Ovary (tissue), 10 donors: ENCODE measurements at regions of chr1 and their contacts with region 1.

Region 1: GRCh38 chr1:119662034-119662437 is 14.0 kb upstream of the ZNF697 start:
- DNase-seq: no peak
- H3K4me3 ChIP-seq: no peak overlapping the region
- H3K27ac ChIP-seq: no peak overlapping the region
- H3K4me1 ChIP-seq: peaks cover 6% of the 10 kb centered on the region
- H3K27me3 ChIP-seq: no peaks in the 10 kb centered on the region
- CTCF ChIP-seq: no peak
- EP300 ChIP-seq: no peak
- POLR2A ChIP-seq: no peak

Region 2: GRCh38 chr1:119219711-119220110 is 442.3 kb before region 1 on chr1:
- intact Hi-C with region 1: loop called in 1 of 4 experiments (anchors 5 kb)
- DNase-seq: no peak
- H3K4me3 ChIP-seq: no peak overlapping the region
- H3K27ac ChIP-seq: no peak overlapping the region
- H3K4me1 ChIP-seq: no peaks in the 10 kb centered on the region
- H3K27me3 ChIP-seq: no peaks in the 10 kb centered on the region
- CTCF ChIP-seq: no peak
- EP300 ChIP-seq: no peak
- POLR2A ChIP-seq: no peak

Region 3: DNA sequence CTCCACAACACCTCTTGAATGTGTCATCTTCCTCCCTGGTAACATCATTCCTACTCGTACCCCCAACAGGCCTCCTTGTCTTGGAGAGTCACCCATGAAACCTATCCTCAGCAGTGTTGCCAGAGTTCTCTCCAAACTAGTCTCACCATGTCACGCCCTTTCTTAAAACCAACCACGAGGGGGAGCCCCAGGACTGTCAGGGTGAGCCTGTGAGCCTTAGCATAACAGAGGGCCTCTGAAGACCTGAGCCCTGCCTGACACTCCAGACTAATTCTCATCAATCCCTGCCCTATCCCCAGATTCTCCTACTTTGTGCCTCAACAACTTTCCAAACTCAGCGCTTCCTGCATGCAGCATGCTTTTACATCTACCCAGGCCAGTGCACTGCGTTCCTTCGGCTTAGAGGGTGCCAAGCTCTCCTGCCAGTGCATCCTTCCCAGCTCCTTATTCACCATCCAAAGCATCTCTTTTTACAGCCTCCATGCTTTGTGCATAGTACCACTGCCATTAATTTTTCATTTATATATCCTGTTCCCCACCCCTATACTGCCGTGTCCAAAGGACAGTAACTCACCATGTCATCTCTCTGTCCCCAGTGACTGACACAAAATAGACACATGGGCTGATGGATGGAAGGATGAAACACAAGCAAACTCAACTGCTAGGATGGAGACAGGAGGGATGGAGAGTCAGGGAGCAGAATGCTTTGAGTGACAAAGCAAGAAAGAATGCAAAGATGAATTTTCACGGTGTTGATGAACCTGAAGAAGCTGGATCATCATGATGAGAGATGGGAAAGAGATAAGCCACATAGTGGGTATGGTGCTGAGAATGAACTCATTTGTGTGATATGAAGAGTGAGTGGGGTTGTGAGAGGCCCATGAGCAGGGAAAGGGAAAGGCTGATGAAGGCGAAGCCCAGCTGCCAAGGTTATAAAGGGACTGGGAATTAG is 48.0 kb before region 1 on chr1:
- intact Hi-C with region 1: loop called (anchors 2 to 5 kb)
- DNase-seq: peak; percentile 82 to 91 (median 88)
- H3K4me3 ChIP-seq: no peak overlapping the region
- H3K27ac ChIP-seq: no peak overlapping the region
- H3K4me1 ChIP-seq: peaks cover 13% of the 10 kb centered on the region
- H3K27me3 ChIP-seq: no peaks in the 10 kb centered on the region
- CTCF ChIP-seq: peak; percentile 75 to 85 (median 84)
- EP300 ChIP-seq: no peak
- POLR2A ChIP-seq: no peak